ENCODE measurements at regions of chr17 and their contacts with region 1.

Region 1: GRCh38 chr17:79789534-79790353 is 7.1 kb downstream of the CBX8 start:
- DNase-seq: peak; percentile 64 to 87 (median 82)
- ATAC-seq: peak; percentile 92
- H3K4me3 ChIP-seq: no peak overlapping the region
- H3K27ac ChIP-seq: no peak overlapping the region
- H3K4me1 ChIP-seq: peaks cover 3 to 42% of the 10 kb centered on the region in 2 experiments; a peak in 4 of 5 replicates
- H3K27me3 ChIP-seq: no peaks in the 10 kb centered on the region
- CTCF ChIP-seq: peak; percentile 76 to 89 (median 77)
- EP300 ChIP-seq: no peak
- POLR2A ChIP-seq: no peak
- RAD21 ChIP-seq: peak; percentile 91 to 93

Region 2: DNA sequence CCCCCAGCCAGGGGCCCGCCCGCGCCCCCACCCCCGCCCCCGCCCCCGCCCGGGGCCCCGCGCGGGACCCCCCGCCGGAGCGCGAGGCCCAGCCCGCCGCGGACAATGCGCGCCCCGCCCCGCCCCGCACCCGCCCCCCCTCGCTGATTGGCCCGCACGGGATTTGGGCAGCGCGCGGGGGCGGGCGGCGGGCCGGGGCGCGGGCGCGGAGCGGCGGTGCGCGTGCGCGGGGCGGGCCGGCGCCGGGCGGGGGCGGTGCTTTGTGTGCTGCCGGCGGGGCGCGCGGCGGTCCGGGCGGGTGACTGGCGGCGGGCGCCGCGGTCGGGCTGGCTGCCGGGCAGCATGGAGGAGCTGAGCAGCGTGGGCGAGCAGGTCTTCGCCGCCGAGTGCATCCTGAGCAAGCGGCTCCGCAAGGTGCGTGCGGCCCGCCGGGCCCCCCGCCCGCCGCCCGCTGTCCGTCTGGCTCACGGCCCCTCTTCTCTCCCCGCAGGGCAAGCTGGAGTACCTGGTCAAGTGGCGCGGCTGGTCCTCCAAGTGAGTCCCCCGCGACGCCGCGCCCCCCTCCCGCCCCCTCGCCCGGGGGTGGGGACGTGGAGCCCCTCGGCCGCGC is 11.7 kb before region 1 on chr17 and contains the start of gene CBX2:
- CTCF ChIA-PET with region 1: no interaction called
- POLR2A ChIA-PET with region 1: interaction called, 11 read pairs
- in situ Hi-C with region 1: no loop called
- intact Hi-C with region 1: no loop called
- DNase-seq: peak; percentile 88 to 98 (median 96)
- ATAC-seq: peak; percentile 75
- H3K4me3 ChIP-seq: peak within 1 kb of the TSS; percentile 77
- H3K27ac ChIP-seq: peak within 1 kb of the TSS; percentile 77
- H3K4me1 ChIP-seq: peaks cover 23 to 38% of the 10 kb centered on the region in 2 experiments
- H3K27me3 ChIP-seq: no peaks in the 10 kb centered on the region
- CTCF ChIP-seq: no peak
- EP300 ChIP-seq: no peak
- POLR2A ChIP-seq: no peak
- RAD21 ChIP-seq: no peak
- polyA plus RNA-seq, gene CBX2: 0.66 to 1.0 TPM

Region 3: DNA sequence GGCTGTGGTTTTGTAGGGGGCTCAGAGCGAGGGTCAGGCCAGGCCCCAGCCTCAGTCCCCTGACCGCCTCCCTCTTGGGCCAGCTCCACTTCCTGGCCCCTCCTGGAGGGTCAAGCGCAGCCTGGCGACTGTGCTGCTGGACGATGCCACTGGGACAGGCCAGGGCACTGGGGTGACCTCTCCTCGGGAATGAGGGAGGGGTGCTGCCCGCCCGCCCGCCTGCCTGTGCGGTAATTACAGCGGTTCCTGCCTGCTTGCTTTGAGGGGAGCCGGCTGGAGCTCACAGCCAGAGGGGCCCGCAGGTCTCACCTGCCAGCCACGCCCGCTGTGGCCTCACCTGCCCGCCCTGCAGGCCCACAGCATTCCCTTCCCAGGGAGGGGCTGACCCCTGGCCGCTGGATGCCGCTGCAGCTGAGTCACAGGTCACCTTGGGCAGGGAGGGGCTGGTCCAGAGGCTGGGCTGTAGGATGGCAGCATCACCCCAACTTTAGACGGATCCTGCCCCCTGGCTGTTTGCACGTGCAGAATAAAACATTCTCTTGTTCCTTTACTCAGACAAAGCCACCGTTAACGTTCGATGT is 126.2 kb after region 1 on chr17:
- CTCF ChIA-PET with region 1: interaction called, 17 read pairs
- POLR2A ChIA-PET with region 1: no interaction called
- in situ Hi-C with region 1: no loop called
- intact Hi-C with region 1: loop called (anchors 1 kb)
- DNase-seq: peak; percentile 71 to 84 (median 82)
- ATAC-seq: peak; percentile 90
- H3K4me3 ChIP-seq: no peak overlapping the region
- H3K27ac ChIP-seq: no peak overlapping the region
- H3K4me1 ChIP-seq: peaks cover 0 to 22% of the 10 kb centered on the region in 2 experiments; a peak in 2 of 5 replicates
- H3K27me3 ChIP-seq: peaks cover 2 to 70% of the 10 kb centered on the region in 2 experiments; a peak in 3 of 5 replicates
- CTCF ChIP-seq: peak; percentile 66 to 81 (median 72)
- EP300 ChIP-seq: no peak
- POLR2A ChIP-seq: no peak
- RAD21 ChIP-seq: peak; percentile 88 to 92

Measured in K562 (cell line).